SK-N-SH (cell line): ENCODE measurements at regions of chr20 and their contacts with region 1.

Region 1: GRCh38 chr20:59087829-59088433 is 45.3 kb upstream of the PRELID3B start:
- DNase-seq: peak; percentile 55
- H3K4me3 ChIP-seq: peak overlapping the region in 1 of 2 experiments; percentile 39; a peak in 1 of 4 replicates
- H3K27ac ChIP-seq: no peak overlapping the region
- H3K4me1 ChIP-seq: peaks cover 0 to 3% of the 10 kb centered on the region in 2 experiments; a peak in 2 of 4 replicates
- H3K27me3 ChIP-seq: no peaks in the 10 kb centered on the region
- CTCF ChIP-seq: peak; percentile 90
- EP300 ChIP-seq: no peak
- RAD21 ChIP-seq: peak; percentile 71

Region 2: DNA sequence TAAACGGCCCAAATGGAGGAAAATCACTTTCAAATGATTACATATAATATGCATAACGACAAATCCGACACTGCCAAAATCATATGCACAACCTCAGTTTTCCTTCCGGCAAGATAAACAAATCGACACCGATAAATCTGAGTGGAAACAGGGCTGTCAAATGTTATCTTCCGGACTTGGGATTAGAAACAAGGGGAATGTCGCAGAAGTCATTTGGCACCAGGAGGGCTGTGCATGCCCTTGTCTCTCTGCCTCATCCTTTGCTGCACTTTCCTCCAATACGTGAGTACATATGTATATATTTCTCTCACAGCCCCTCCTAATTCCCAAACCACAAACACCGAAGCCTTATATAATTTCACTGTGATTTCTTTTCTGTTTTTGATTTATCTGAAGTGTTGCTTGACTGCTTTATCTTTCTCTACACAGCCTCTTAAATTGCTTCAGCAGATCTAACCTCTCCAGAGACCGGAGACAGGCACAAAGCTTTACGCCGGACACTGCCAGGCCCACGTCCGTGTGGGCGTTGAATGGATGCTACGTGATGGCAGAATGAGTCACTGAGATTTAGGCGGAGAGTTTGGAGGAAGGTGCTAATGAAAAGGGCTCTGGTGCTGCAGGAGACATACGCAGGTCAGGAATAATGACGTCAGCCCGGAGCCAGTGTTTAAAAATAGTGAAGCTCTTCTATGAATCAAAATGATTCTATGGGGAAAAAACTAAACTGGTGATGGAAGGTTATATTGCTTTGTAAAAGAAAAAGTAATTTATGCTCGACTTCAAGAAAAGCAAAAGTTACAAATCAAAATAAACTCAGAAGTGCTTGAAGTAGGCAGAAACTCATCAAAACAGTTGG is 24.3 kb before region 1 on chr20:
- CTCF ChIA-PET with region 1: interaction called, 13 read pairs
- POLR2A ChIA-PET with region 1: no interaction called
- DNase-seq: peak; percentile 45
- H3K4me3 ChIP-seq: peak overlapping the region; percentile 4 to 31; a peak in 2 of 4 replicates
- H3K27ac ChIP-seq: peak overlapping the region in 1 of 2 experiments; percentile 81; a peak in 3 of 4 replicates
- H3K4me1 ChIP-seq: peaks cover 8 to 16% of the 10 kb centered on the region in 2 experiments; a peak in 3 of 4 replicates
- H3K27me3 ChIP-seq: no peaks in the 10 kb centered on the region
- CTCF ChIP-seq: no peak
- EP300 ChIP-seq: no peak
- RAD21 ChIP-seq: no peak

Region 3: DNA sequence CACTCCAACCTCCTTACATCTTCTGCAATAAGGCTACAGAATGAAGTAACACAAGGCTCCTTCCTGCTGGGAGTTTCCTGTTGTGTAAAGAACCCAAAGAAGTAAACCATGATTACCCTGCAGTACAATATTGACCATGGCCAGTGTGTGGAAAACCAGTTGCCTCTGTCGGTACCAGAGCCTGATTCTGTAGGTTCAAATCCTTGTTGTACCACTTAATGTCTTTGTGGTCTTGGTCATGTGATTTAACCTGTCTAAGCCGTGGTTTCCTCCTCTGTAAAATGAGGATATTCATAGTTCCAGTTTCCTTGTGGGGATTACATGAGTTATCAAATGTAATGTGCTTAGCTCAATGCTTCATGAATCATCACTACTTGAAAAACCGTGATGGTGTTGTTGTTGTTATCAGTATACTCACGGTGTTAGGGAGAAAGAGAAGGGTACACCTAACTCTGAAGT is 14.9 kb after region 1 on chr20:
- CTCF ChIA-PET with region 1: interaction called, 22 read pairs
- POLR2A ChIA-PET with region 1: no interaction called
- DNase-seq: no peak
- H3K4me3 ChIP-seq: no peak overlapping the region
- H3K27ac ChIP-seq: no peak overlapping the region
- H3K4me1 ChIP-seq: no peaks in the 10 kb centered on the region; a peak in 1 of 4 replicates
- H3K27me3 ChIP-seq: no peaks in the 10 kb centered on the region
- CTCF ChIP-seq: no peak
- EP300 ChIP-seq: no peak
- RAD21 ChIP-seq: no peak

Region 4: DNA sequence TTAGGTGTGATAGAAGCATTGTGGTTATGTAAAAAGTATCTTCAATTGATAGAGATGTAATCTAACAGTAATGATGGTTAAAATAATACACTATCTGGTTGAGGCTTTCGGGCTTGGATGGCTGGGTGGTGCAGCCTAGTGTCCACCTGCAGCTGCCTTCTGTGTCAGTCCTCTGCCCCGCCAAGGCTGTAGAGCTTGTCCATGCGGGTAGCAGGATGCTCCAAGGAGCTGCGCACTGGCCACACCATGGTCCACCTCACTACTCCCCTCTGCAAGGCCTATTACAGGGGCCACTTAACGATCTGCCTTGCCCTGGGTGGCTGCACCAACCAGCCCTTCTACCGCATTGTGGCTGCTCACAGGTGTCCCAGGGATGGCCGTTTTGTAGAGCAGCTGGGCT is 25.0 kb after region 1 on chr20:
- CTCF ChIA-PET with region 1: interaction called, 11 read pairs
- POLR2A ChIA-PET with region 1: no interaction called
- DNase-seq: no peak
- H3K4me3 ChIP-seq: no peak overlapping the region
- H3K27ac ChIP-seq: no peak overlapping the region
- H3K4me1 ChIP-seq: no peaks in the 10 kb centered on the region
- H3K27me3 ChIP-seq: no peaks in the 10 kb centered on the region
- CTCF ChIP-seq: no peak
- EP300 ChIP-seq: no peak
- RAD21 ChIP-seq: no peak